Activated CD8-positive, alpha-beta T cell treated with anti-CD3 and anti-CD28 coated beads for 36 hours (primary cell): ENCODE measurements at regions of chr1 and their contacts with region 1.

Region 1: DNA sequence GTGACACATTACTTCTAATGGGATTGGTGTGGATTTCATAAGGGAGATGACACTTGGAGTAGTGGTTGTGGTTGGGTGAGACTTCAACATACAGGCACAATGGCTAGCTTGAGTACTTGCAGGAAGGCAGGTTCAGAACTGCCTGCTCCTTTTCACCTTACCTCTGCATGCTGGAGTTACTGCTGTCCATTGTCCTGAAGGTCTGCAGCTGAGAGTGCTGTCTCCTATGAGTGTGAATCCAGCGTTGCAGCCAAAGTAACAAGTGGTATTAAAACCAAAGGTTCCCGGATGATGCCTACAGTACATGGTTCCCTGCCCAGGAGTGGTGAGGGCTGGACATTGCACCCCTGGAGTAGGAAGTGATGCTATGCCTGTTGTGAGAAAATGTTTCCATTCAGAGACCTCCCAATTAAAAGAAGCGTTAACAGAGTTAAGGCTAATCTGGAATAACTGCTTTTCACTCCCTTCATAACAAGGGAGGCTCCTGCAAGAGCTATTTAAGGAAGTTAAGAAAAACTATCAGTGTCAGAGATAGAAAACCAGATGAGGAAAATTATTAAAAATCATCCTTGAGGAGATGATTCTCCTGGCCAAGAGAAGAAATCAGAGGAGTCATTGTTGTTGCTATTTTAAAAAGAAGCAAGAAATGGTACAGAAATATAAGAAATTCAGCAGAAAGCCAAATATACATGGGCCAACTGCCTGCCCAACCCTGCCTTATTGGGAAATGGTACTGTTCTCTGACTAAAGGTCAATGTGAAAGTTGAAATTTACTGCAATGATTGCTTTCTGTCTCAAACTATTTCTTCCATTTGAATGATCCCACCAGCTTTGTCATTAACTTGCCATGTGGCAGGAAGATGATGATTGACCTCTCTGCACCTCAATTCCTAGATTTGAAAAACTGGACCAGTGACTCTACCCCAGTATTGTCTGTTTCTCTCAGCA is 9.8 kb upstream of the F5 start:
- DNase-seq: peak; percentile 64
- ATAC-seq: peak; percentile 42
- H3K4me3 Mint-ChIP-seq: no peak overlapping the region
- H3K27ac Mint-ChIP-seq: no peak overlapping the region
- H3K4me1 Mint-ChIP-seq: peaks cover 55% of the 10 kb centered on the region
- H3K27me3 Mint-ChIP-seq: no peaks in the 10 kb centered on the region
- CTCF ChIP-seq: no peak

Region 2: GRCh38 chr1:169701261-169702005 is 105.4 kb after region 1 on chr1:
- CTCF ChIA-PET with region 1: interaction called, 96 read pairs
- POLR2A ChIA-PET with region 1: interaction called, 9 read pairs
- intact Hi-C with region 1: loop called (anchors 2 kb)
- DNase-seq: no peak
- ATAC-seq: peak; percentile 12
- H3K4me3 Mint-ChIP-seq: peak overlapping the region; percentile 3
- H3K27ac Mint-ChIP-seq: peak overlapping the region; percentile 82
- H3K4me1 Mint-ChIP-seq: peaks cover 93% of the 10 kb centered on the region
- H3K27me3 Mint-ChIP-seq: no peaks in the 10 kb centered on the region
- CTCF ChIP-seq: no peak

Region 3: DNA sequence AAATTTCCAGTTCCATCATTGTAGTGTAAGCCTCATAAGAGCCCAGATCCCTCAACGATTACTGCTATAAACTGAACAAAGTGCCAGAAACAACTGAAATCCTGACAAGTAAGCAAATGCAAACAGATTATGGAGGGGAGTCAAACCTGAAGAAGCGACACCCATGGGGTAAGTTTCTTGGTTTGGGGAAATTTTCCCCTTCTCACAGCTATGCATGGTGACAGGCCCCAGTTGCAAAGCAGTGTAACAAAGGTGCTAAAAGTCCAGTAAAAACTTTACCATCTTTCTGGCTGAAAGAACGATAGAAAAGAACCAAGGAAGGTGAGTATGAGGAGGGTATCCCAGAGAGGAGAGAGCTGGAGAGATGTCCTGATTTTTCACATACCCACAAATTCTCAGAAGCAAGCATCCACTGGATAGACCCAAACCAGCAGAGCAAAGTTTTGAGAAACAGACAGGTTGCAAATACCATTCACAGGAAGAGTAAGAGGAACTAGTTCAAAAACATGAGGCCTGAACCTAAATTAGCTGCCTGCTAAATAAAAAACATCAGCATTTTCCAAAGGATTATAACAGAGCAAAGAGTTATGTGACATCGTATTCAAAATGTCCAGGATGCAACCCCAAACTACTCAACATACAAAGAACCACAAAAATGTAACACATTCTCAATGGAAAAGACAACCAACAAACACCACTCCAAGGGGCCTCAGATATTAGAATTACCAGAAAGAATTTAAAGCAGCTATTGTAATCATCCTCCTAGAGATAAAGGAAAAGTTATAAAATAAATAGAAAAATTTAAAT is 283.2 kb after region 1 on chr1:
- CTCF ChIA-PET with region 1: no interaction called
- POLR2A ChIA-PET with region 1: no interaction called
- intact Hi-C with region 1: no loop called
- DNase-seq: no peak
- ATAC-seq: no peak
- H3K4me3 Mint-ChIP-seq: no peak overlapping the region
- H3K27ac Mint-ChIP-seq: peak overlapping the region; percentile 10
- H3K4me1 Mint-ChIP-seq: peaks cover 18% of the 10 kb centered on the region
- H3K27me3 Mint-ChIP-seq: no peaks in the 10 kb centered on the region
- CTCF ChIP-seq: no peak